BJ (cell line): ENCODE measurements at regions of chr12 and their contacts with region 1.

Region 1: GRCh38 chr12:119841433-119842210 is 35.5 kb downstream of the CIT start:
- DNase-seq: no peak
- H3K4me3 ChIP-seq: no peak overlapping the region
- H3K27me3 ChIP-seq: no peaks in the 10 kb centered on the region
- CTCF ChIP-seq: no peak

Region 2: DNA sequence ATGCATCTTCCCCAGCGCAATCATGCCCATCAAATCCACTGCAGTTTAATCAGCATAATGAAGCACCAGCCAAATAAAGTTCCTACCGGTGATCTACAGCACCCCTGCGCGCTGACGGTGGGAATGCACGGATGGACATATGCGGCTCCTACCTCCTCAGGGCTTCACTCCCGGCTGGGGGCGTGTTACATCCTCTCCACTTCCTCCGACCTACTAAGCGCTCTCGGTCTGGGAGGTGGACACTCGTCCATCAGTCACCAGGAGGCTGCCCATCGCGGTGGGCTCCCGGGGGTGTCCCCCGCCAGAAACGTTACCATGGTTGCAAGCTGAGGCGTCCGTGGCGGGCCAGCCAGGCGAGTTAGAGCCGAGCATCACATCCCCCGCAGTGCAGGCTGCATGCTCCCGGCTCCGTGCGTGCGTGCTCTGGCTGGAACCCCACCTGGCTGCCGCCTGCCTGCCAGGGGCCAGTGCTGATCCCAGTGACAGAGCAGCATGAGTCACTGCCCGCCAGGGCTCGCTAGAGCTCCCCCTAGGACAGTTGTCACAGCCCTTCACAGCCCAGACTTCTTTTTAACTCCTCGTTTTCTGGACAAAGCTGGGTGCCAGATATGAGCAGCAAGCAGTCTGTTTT is 37.5 kb before region 1 on chr12:
- CTCF ChIA-PET with region 1: interaction called, 3 read pairs
- POLR2A ChIA-PET with region 1: interaction called, 20 read pairs
- DNase-seq: no peak
- H3K4me3 ChIP-seq: peak overlapping the region; percentile 49
- H3K27me3 ChIP-seq: no peaks in the 10 kb centered on the region
- CTCF ChIP-seq: peak; percentile 56